Panc1 (cell line): ENCODE measurements at regions of chr2 and their contacts with region 1.

Region 1: GRCh38 chr2:47344890-47345589 is 57.9 kb upstream of the MSH2 start:
- DNase-seq: no peak
- ATAC-seq: peak; percentile 99
- H3K4me3 ChIP-seq: peak overlapping the region; percentile 50 to 75
- H3K27ac ChIP-seq: peak overlapping the region; percentile 98
- H3K4me1 ChIP-seq: peaks cover 14% of the 10 kb centered on the region
- H3K27me3 ChIP-seq: no peaks in the 10 kb centered on the region
- CTCF ChIP-seq: no peak

Region 2: DNA sequence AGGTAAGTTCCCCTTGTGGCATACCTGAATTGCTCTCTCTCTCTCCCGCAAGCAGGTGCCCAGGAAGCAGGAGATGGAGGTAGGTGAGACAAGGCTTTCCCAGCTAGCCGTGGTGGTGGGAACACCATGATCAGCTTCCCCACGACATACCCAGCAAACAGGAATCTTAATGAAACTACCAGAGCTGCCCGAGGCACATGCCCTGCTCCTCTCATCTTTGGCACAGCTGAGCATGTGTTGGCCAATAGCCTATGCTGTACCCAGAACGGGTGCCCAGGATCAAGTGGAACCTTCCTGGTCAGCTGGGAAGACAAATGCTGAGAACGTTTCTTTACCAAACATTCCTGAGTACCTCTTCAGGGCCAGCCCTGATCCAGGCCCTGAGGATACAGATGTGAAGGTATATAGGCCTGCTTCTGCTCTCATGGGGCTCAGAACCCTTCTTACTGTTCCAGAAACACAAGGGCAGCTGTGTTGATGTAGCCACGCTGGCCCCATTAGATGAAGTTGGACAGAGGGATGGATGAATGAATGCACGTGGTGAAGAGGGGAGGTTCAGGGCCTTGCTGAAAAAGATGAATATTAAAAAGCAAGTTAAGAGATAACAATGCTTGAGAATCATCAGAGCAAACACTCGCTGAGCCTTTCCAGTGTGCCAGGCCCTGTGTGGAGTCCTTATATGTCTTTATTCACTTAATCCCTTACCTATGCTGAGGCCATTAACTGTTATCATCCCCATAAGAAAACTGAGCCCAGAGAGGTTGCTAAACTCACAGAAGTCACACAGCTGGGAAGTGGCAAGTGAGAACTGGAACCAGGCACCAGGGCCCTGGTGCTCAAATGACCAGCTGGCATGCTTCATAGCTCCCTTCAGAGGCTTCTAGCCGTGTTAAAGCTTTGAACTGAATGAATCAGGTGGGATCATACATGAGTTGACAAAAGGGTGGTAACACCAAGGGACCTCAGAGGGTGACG is 934.5 kb before region 1 on chr2:
- CTCF ChIA-PET with region 1: no interaction called
- POLR2A ChIA-PET with region 1: no interaction called
- in situ Hi-C with region 1: no loop called
- intact Hi-C with region 1: no loop called
- DNase-seq: no peak
- ATAC-seq: no peak
- H3K4me3 ChIP-seq: no peak overlapping the region
- H3K27ac ChIP-seq: no peak overlapping the region
- H3K4me1 ChIP-seq: peaks cover 11% of the 10 kb centered on the region
- H3K27me3 ChIP-seq: no peaks in the 10 kb centered on the region
- CTCF ChIP-seq: no peak

Region 3: GRCh38 chr2:47304654-47305053 is 40.4 kb before region 1 on chr2:
- CTCF ChIA-PET with region 1: interaction called, 10 read pairs
- POLR2A ChIA-PET with region 1: no interaction called
- in situ Hi-C with region 1: no loop called
- intact Hi-C with region 1: no loop called
- DNase-seq: no peak
- ATAC-seq: no peak
- H3K4me3 ChIP-seq: no peak overlapping the region
- H3K27ac ChIP-seq: no peak overlapping the region
- H3K4me1 ChIP-seq: no peaks in the 10 kb centered on the region
- H3K27me3 ChIP-seq: no peaks in the 10 kb centered on the region
- CTCF ChIP-seq: no peak

Region 4: GRCh38 chr2:47402805-47403608 is 58.0 kb after region 1 on chr2 and contains the start of gene MSH2:
- CTCF ChIA-PET with region 1: interaction called, 3 read pairs
- POLR2A ChIA-PET with region 1: interaction called, 14 read pairs
- in situ Hi-C with region 1: no loop called
- intact Hi-C with region 1: no loop called
- DNase-seq: peak; percentile 67
- ATAC-seq: peak; percentile 97
- H3K4me3 ChIP-seq: peak within 1 kb of the TSS; percentile 76 to 85
- H3K27ac ChIP-seq: peak within 1 kb of the TSS; percentile 84
- H3K4me1 ChIP-seq: no peaks in the 10 kb centered on the region; the same call in 1 of the 2 replicates
- H3K27me3 ChIP-seq: no peaks in the 10 kb centered on the region
- CTCF ChIP-seq: no peak
- total RNA-seq, gene MSH2: 72.2 TPM

Region 5: GRCh38 chr2:47558116-47558767 is 213.2 kb after region 1 on chr2:
- CTCF ChIA-PET with region 1: no interaction called
- POLR2A ChIA-PET with region 1: interaction called, 13 read pairs
- in situ Hi-C with region 1: no loop called
- intact Hi-C with region 1: no loop called
- DNase-seq: no peak
- ATAC-seq: no peak
- H3K4me3 ChIP-seq: no peak overlapping the region
- H3K27ac ChIP-seq: no peak overlapping the region
- H3K4me1 ChIP-seq: no peaks in the 10 kb centered on the region
- H3K27me3 ChIP-seq: peaks cover 9% of the 10 kb centered on the region
- CTCF ChIP-seq: no peak